ENCODE measurements at regions of chr4 and their contacts with region 1.

Region 1: DNA sequence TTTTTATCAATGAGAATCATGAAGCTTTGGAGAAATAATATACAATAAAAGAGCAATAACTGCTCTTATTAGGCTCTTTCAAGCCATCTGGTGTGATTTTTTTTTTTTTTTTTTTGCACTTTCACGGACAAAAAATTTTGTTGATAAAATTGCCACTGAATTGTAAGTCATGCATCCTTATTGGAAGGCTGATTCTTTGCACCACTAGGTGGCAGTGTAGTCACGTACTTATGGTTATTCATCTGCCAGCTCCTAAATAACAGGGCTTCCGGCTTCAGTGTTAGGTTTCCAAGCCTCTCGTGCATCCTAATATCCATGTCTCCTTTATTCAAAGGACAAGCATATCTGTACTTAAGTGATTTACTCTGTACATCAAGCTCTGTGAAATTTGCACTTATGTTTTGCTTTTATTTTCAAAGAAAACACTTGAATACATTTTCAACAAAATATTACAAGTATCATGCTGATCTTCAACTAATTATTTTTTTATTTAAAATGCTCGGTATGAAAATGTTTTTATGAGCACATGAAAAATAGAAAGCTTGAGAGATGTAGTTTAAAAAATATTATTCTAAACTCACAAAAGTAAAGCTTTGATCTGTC is 1578.3 kb upstream of the TENM3 start:
- DNase-seq: peak; percentile 68
- H3K4me3 ChIP-seq: no peak overlapping the region
- H3K27ac ChIP-seq: no peak overlapping the region
- H3K4me1 ChIP-seq: no peaks in the 10 kb centered on the region
- H3K27me3 ChIP-seq: no peaks in the 10 kb centered on the region
- CTCF ChIP-seq: peak; percentile 72

Region 2: GRCh38 chr4:179867300-179867878 is 797.5 kb before region 1 on chr4:
- intact Hi-C with region 1: loop called (anchors 10 kb)
- DNase-seq: peak; percentile 49
- H3K4me3 ChIP-seq: no peak overlapping the region
- H3K27ac ChIP-seq: no peak overlapping the region
- H3K4me1 ChIP-seq: no peaks in the 10 kb centered on the region
- H3K27me3 ChIP-seq: no peaks in the 10 kb centered on the region
- CTCF ChIP-seq: peak; percentile 57

Region 3: DNA sequence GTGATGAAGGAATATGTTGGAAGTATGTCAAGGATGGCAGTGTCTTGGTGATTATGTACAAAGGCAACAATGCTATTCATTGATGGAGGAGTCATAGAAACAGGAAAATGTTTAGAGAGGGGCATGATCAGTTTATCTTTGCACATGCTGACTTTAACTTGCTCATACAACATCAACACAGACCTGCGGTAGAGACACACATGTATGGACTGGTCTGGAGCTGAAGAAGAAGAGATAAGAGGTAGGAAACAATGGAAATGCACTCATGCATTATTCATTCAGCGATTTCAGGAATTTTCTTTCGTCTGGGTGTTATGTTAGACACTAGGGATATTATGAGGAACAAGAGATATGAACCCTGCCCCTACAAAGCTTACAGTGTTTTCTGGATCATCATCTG is 326.1 kb after region 1 on chr4:
- intact Hi-C with region 1: no loop called
- DNase-seq: no peak
- H3K4me3 ChIP-seq: no peak overlapping the region
- H3K27ac ChIP-seq: no peak overlapping the region
- H3K4me1 ChIP-seq: no peaks in the 10 kb centered on the region
- H3K27me3 ChIP-seq: no peaks in the 10 kb centered on the region
- CTCF ChIP-seq: no peak

Measured in colonic mucosa (tissue), 4 donors.